Naive thymus-derived CD4-positive, alpha-beta T cell (primary cell): ENCODE measurements at regions of chr5 and their contacts with region 1.

Region 1: GRCh38 chr5:67209142-67209771 is 12.7 kb upstream of the CD180 start:
- DNase-seq: peak; percentile 33 to 77 (median 69)
- ATAC-seq: peak; percentile 74
- H3K4me3 ChIP-seq: peak overlapping the region; percentile 14
- H3K4me3 Mint-ChIP-seq: peak overlapping the region in 5 of 10 donors; percentile 47 to 55 (median 50)
- H3K27ac ChIP-seq: peak overlapping the region; percentile 0
- H3K27ac Mint-ChIP-seq: peak overlapping the region; percentile 78 to 98 (median 85)
- H3K4me1 ChIP-seq: peaks cover 50 to 54% of the 10 kb centered on the region in 2 donors
- H3K4me1 Mint-ChIP-seq: peaks cover 39 to 71% (median 66%) of the 10 kb centered on the region in 7 donors
- H3K27me3 ChIP-seq: no peaks in the 10 kb centered on the region
- H3K27me3 Mint-ChIP-seq: peaks cover 0 to 2% (median 0%) of the 10 kb centered on the region in 5 donors

Region 2: GRCh38 chr5:65721720-65722574 is 1487.3 kb before region 1 on chr5 and contains the starts of genes NLN and SGTB:
- CTCF ChIA-PET with region 1: no interaction called
- POLR2A ChIA-PET with region 1: no interaction called
- intact Hi-C with region 1: loop called in 1 of 2 experiments (anchors 10 kb)
- DNase-seq: peak; percentile 65 to 93 (median 83)
- ATAC-seq: peak; percentile 97
- H3K4me3 ChIP-seq: peak within 1 kb of the TSS; percentile 75
- H3K4me3 Mint-ChIP-seq: peak within 1 kb of the TSS in 6 of 10 donors; percentile 85 to 97 (median 92)
- H3K27ac ChIP-seq: peak within 1 kb of the TSS; percentile 97
- H3K27ac Mint-ChIP-seq: peak within 1 kb of the TSS; percentile 74 to 91 (median 86)
- H3K4me1 ChIP-seq: peaks cover 22 to 33% of the 10 kb centered on the region in 2 donors
- H3K4me1 Mint-ChIP-seq: peaks cover 9 to 36% (median 15%) of the 10 kb centered on the region in 7 donors
- H3K27me3 ChIP-seq: no peaks in the 10 kb centered on the region
- H3K27me3 Mint-ChIP-seq: no peaks in the 10 kb centered on the region
- total RNA-seq, gene NLN: 3.5 to 11.9 (median 4.1) TPM
- total RNA-seq, gene SGTB: 12.8 to 59.5 (median 50.8) TPM

Region 3: GRCh38 chr5:66814146-66814991 is 394.9 kb before region 1 on chr5:
- CTCF ChIA-PET with region 1: interaction called, 5 read pairs
- POLR2A ChIA-PET with region 1: no interaction called
- intact Hi-C with region 1: loop called (anchors 1 kb)
- DNase-seq: peak in 7 of 9 donors; percentile 19 to 51 (median 36)
- ATAC-seq: peak; percentile 73
- H3K4me3 ChIP-seq: no peak overlapping the region
- H3K4me3 Mint-ChIP-seq: no peak overlapping the region
- H3K27ac ChIP-seq: no peak overlapping the region
- H3K27ac Mint-ChIP-seq: peak overlapping the region in 1 of 9 donors; percentile 7
- H3K4me1 ChIP-seq: peaks cover 0 to 3% of the 10 kb centered on the region in 2 donors
- H3K4me1 Mint-ChIP-seq: peaks cover 0 to 34% (median 0%) of the 10 kb centered on the region in 7 donors
- H3K27me3 ChIP-seq: no peaks in the 10 kb centered on the region
- H3K27me3 Mint-ChIP-seq: peaks cover 0 to 15% (median 5%) of the 10 kb centered on the region in 5 donors

Region 4: DNA sequence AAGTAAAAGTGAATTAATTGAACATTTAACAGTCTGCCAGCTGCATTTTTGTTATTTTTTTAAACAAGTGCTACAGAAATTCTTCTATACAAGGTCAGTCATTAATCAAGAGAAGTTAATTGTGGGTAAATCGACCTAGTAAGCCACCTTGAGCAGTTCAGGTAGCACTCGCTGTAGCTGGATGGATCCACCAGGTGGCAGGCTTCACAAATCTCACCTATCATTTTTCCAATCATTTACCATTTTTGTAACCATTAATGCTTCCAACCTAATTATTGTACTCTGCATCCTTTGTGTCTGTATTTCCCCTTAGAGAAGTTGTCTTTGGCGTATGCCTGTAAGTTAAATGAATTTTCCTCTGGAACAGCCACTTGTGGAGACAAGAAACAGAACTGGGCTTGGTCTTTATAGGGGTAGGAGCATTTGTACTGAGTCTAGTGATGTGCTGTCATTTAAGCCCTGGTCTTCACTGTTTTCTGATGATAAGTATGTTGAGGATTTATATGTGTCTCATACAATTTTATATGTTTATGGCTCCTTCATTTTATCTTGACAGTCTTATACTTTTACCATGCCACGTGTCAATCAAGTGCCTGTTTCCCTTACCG is 52.2 kb before region 1 on chr5:
- CTCF ChIA-PET with region 1: interaction called, 370 read pairs
- POLR2A ChIA-PET with region 1: interaction called, 348 read pairs
- intact Hi-C with region 1: loop called (anchors 1 kb)
- DNase-seq: peak in 7 of 9 donors; percentile 28 to 64 (median 52)
- ATAC-seq: peak; percentile 75
- H3K4me3 ChIP-seq: no peak overlapping the region
- H3K4me3 Mint-ChIP-seq: peak overlapping the region in 4 of 10 donors; percentile 2 to 53 (median 48)
- H3K27ac ChIP-seq: no peak overlapping the region
- H3K27ac Mint-ChIP-seq: peak overlapping the region in 8 of 9 donors; percentile 49 to 100 (median 74)
- H3K4me1 ChIP-seq: peaks cover 41 to 42% of the 10 kb centered on the region in 2 donors
- H3K4me1 Mint-ChIP-seq: peaks cover 25 to 61% (median 55%) of the 10 kb centered on the region in 7 donors
- H3K27me3 ChIP-seq: no peaks in the 10 kb centered on the region
- H3K27me3 Mint-ChIP-seq: no peaks in the 10 kb centered on the region

Region 5: DNA sequence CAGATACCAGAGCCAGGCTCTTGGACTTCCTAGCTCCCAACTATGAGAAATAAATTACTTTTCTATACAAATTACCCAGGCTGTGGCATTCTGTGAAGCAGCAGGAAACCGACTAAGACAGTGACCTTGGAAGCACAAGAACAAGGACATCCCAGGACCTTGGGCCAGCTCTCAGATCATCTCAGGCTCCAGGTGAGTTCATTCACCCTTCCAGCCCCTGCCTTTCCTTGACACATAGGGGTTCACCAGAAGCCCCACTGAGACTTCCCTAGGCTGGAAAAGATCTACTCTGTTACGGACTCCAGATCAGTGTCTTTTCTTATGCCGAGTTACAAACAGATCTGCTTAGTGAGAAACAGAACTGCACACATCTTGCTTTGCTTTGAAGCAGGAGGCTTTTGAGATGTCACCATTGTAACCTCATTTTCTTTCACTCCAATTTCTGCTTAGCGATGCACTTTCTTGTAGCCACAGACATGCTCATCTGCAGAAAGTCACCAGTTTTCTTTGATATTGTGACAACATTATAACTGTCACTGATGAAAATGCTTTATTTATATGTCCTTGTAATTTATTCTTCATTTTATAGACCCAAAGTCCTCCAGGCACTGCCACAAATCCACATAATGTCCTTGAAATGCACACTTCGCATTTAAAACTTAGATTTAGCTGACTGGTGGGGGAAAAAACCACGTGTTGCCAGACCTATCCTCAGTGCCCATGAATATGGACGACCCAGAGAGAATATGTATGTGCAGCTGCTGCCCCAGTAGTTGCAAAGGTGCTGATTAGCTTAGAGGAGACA is 20.8 kb before region 1 on chr5:
- CTCF ChIA-PET with region 1: interaction called, 4 read pairs
- POLR2A ChIA-PET with region 1: interaction called, 5 read pairs
- intact Hi-C with region 1: loop called (anchors 1 to 2 kb)
- DNase-seq: peak in 2 of 9 donors; percentile 20
- ATAC-seq: no peak
- H3K4me3 ChIP-seq: no peak overlapping the region
- H3K4me3 Mint-ChIP-seq: peak overlapping the region in 9 of 10 donors; percentile 30 to 72 (median 54)
- H3K27ac ChIP-seq: peak overlapping the region; percentile 47
- H3K27ac Mint-ChIP-seq: peak overlapping the region; percentile 55 to 94 (median 80)
- H3K4me1 ChIP-seq: peaks cover 8 to 29% of the 10 kb centered on the region in 2 donors
- H3K4me1 Mint-ChIP-seq: peaks cover 39 to 69% (median 51%) of the 10 kb centered on the region in 7 donors
- H3K27me3 ChIP-seq: no peaks in the 10 kb centered on the region
- H3K27me3 Mint-ChIP-seq: no peaks in the 10 kb centered on the region

Region 6: DNA sequence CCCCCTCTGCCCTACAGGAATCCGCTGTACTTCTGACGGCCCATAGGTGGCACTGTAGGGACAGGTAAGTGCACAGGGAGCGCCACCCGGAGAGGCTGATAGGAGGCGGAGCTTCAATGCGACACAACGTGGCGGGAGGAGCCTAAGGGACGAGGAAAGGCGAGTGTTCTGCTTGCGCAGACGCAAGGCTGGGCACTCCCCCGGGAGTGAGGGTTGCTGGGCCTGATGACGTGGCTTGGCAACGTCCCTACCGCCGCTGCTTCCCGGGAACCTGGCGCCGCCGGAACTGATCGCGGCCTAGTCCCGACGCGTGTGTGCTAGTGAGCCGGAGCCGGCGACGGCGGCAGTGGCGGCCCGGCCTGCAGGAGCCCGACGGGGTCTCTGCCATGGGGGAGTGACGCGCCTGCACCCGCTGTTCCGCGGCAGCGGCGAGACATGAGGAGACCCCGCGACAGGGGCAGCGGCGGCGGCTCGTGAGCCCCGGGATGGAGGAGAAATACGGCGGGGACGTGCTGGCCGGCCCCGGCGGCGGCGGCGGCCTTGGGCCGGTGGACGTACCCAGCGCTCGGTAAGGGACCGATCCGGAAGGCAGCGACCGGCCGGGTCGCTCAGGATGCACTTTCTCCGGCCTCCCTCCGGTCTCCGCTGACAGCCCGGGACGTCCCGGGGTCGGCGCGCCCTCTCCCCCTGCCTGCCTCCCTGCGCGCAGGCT is 1884.7 kb after region 1 on chr5 and contains the start of gene SLC30A5:
- CTCF ChIA-PET with region 1: no interaction called
- POLR2A ChIA-PET with region 1: no interaction called
- intact Hi-C with region 1: loop called in 1 of 2 experiments (anchors 10 kb)
- DNase-seq: peak; percentile 83 to 99 (median 98)
- ATAC-seq: peak; percentile 99
- H3K4me3 ChIP-seq: peak within 1 kb of the TSS; percentile 70
- H3K4me3 Mint-ChIP-seq: peak within 1 kb of the TSS; percentile 89 to 94 (median 93)
- H3K27ac ChIP-seq: peak within 1 kb of the TSS; percentile 98
- H3K27ac Mint-ChIP-seq: peak within 1 kb of the TSS; percentile 84 to 98 (median 95)
- H3K4me1 ChIP-seq: peaks cover 9 to 17% of the 10 kb centered on the region in 2 donors
- H3K4me1 Mint-ChIP-seq: peaks cover 17 to 49% (median 37%) of the 10 kb centered on the region in 7 donors
- H3K27me3 ChIP-seq: no peaks in the 10 kb centered on the region
- H3K27me3 Mint-ChIP-seq: no peaks in the 10 kb centered on the region
- total RNA-seq, gene SLC30A5: 15.9 to 46.5 (median 41.3) TPM